Gastrocnemius medialis (tissue), 4 donors: ENCODE measurements at regions of chr11 and their contacts with region 1.

Region 1: DNA sequence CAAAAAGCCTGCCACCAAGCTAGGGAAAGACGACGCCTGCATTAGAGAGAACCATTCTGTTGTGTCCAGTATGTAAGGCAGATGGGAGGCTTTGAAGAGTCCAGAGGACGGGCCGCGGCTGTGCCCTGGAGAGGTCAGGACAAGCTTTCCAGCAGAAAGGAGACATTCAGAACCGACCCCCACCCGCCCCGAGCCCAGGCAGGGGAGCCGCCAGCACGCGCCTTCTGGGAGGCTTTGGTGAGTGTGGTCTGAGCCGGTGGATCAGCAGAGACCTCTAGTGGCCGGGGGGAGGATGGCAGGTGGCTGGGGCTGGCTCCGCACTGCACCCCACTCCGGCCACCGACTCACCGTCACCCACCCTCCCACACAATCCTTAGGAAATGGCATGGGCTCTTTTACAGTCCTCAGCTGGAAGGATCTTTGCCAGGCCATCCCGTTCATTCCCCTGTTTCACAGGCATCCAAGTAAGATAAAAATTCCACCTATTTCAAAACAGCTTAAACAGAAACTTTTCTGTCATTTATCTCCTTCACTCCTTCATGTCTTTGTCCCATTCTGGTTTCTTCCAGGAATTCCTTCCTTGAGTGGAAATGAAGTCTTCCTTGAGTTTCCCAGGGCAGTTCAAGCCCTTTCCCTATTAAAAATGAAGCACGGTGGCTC is 91.2 kb downstream of the FEZ1 start:
- DNase-seq: peak; percentile 68 to 80
- ATAC-seq: peak; percentile 40 to 50
- H3K4me3 ChIP-seq: peak overlapping the region; percentile 19 to 42 (median 26)
- H3K27ac ChIP-seq: peak overlapping the region; percentile 90 to 96 (median 93)
- H3K4me1 ChIP-seq: peaks cover 56 to 64% of the 10 kb centered on the region in 2 donors
- H3K27me3 ChIP-seq: no peaks in the 10 kb centered on the region
- CTCF ChIP-seq: peak; percentile 92 to 99 (median 98)
- POLR2A ChIP-seq: no peak

Region 2: DNA sequence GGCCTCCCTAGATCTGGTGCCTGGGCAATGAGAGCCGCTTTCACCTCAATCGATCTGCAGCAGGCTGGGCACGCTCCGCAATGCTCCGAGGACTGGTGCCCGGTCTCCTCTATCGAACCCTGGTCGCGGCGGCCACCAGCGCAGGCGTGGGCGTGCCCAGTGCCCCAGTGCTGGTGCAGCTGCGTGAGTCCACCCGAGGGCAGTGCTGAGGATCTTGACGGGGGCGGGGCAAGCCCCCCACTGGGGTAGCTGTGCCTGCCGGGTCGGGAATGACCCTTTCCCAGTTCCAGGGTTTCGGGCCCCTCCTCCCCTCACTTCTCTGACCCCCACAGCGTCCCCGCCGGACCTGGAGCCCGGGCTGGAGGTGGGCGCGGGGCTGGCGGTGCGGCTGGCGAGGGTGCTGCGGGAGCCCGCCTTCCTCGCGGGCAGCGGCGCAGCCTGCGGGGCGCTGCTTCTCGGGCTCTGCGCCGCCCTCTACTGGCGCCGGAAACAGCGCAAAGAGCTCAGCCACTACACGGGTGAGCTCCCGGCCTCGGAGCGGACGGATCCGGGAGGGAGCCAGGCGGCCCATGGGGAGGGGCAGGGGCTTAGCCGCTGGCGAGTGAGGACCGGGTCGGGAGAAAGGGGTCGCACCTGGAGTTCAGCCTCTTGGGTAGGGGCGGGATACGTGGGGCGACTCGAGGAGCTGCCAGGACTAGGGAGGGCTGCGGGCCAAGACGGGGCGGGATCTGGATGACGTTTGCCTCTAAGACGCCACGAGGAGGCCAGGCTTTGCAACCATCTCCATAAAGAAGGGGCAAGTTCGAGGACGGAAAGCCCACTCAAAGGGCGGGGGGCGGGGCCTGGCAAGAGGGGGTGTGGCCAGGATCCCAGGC is 528.7 kb before region 1 on chr11:
- in situ Hi-C with region 1: no loop called
- intact Hi-C with region 1: no loop called
- DNase-seq: peak; percentile 54 to 70
- ATAC-seq: peak; percentile 91
- H3K4me3 ChIP-seq: peak overlapping the region; percentile 60 to 93 (median 64)
- H3K27ac ChIP-seq: peak overlapping the region; percentile 72 to 88 (median 76)
- H3K4me1 ChIP-seq: peaks cover 0 to 13% of the 10 kb centered on the region in 2 donors
- H3K27me3 ChIP-seq: peaks cover 13 to 30% (median 22%) of the 10 kb centered on the region in 3 donors
- CTCF ChIP-seq: peak; percentile 43 to 71 (median 62)
- POLR2A ChIP-seq: peak; percentile 11 to 26

Region 3: DNA sequence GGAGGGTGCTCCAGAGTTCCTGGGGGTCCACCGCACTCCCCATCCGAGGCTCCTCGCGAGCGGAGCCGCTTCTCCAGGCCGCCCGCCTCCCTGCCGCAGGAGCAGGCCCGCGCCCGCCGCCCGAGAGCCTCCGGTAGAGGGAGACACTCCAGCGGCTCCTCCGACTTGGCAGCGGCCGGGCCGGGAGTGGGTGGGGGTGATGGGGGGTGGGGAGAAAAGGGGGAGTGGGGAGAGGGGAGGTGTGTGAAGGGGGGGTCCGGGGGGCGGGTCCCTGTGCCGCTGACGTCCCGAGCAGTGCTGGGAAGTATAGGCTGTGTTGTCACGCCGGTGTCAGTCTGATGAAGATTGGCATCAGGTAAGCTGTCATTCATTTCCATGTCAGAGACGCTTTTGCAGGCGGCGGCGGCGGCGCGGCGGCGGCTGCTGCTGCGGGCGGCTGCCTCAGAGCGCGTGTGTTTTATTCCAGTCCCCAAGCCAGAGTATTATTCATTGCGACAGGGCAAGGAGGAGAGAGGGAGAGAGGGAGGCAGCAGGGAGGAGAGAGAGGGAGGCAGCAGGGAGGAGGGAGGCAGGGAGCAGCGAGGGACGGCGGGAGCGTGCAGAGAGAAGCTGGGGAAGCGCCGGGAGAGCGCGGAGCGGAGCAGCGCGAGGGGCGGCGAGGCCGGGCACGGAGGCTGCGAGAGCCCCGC is 240.3 kb before region 1 on chr11 and contains the start of gene PKNOX2:
- in situ Hi-C with region 1: loop called in 1 of 4 experiments (anchors 10 kb)
- intact Hi-C with region 1: loop called (anchors 1 kb)
- DNase-seq: peak; percentile 61 to 83
- ATAC-seq: peak; percentile 65 to 70
- H3K4me3 ChIP-seq: peak within 1 kb of the TSS; percentile 62 to 90 (median 70)
- H3K27ac ChIP-seq: peak within 1 kb of the TSS; percentile 88 to 99 (median 91)
- H3K4me1 ChIP-seq: peaks cover 31 to 32% of the 10 kb centered on the region in 2 donors
- H3K27me3 ChIP-seq: no peaks in the 10 kb centered on the region
- CTCF ChIP-seq: peak; percentile 51 to 91 (median 54)
- POLR2A ChIP-seq: peak; percentile 93 to 96
- total RNA-seq, gene PKNOX2: 3.7 to 11.7 (median 6.0) TPM

Region 4: GRCh38 chr11:125233809-125234208 is 171.1 kb before region 1 on chr11:
- in situ Hi-C with region 1: no loop called
- intact Hi-C with region 1: loop called (anchors 2 kb)
- DNase-seq: no peak
- ATAC-seq: no peak
- H3K4me3 ChIP-seq: no peak overlapping the region
- H3K27ac ChIP-seq: no peak overlapping the region
- H3K4me1 ChIP-seq: peaks cover 35% of the 10 kb centered on the region in 2 donors
- H3K27me3 ChIP-seq: no peaks in the 10 kb centered on the region
- CTCF ChIP-seq: no peak
- POLR2A ChIP-seq: no peak

Region 5: GRCh38 chr11:125295931-125296330 is 109.0 kb before region 1 on chr11:
- in situ Hi-C with region 1: no loop called
- intact Hi-C with region 1: loop called (anchors 5 kb)
- DNase-seq: no peak
- ATAC-seq: no peak
- H3K4me3 ChIP-seq: no peak overlapping the region
- H3K27ac ChIP-seq: no peak overlapping the region
- H3K4me1 ChIP-seq: peaks cover 19 to 22% of the 10 kb centered on the region in 2 donors
- H3K27me3 ChIP-seq: no peaks in the 10 kb centered on the region
- CTCF ChIP-seq: no peak
- POLR2A ChIP-seq: no peak

Region 6: DNA sequence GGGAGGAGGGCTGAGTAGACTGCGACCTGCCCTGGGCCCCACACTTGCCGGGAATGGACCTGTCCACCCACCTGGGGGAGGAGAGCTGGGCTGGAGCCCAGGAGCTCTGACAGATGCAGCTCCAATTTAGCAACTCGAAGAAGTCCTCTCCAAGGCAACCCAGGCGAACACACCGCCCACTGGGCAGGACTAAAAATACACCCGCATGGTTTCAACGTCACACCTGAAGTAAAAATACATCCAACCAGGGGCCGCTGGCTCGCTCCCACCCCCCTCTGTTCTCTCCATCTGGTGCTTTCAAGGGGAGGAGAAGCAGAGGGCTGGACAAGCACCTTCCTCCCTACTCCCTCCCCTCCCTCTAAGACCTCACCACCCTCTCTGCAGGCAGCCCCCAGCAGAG is 28.8 kb before region 1 on chr11:
- in situ Hi-C with region 1: no loop called
- intact Hi-C with region 1: loop called (anchors 1 kb)
- DNase-seq: peak; percentile 89 to 96
- ATAC-seq: peak; percentile 83 to 84
- H3K4me3 ChIP-seq: peak overlapping the region in 1 of 4 donors; percentile 3
- H3K27ac ChIP-seq: peak overlapping the region; percentile 78 to 93 (median 90)
- H3K4me1 ChIP-seq: peaks cover 53 to 57% of the 10 kb centered on the region in 2 donors
- H3K27me3 ChIP-seq: no peaks in the 10 kb centered on the region
- CTCF ChIP-seq: no peak
- POLR2A ChIP-seq: peak in 1 of 2 donors; percentile 77

Region 7: GRCh38 chr11:126202646-126203359 is 797.9 kb after region 1 on chr11:
- in situ Hi-C with region 1: no loop called
- intact Hi-C with region 1: loop called (anchors 10 kb)
- DNase-seq: peak in 1 of 2 donors; percentile 51
- ATAC-seq: peak in 1 of 2 donors; percentile 40
- H3K4me3 ChIP-seq: peak overlapping the region in 1 of 4 donors; percentile 22
- H3K27ac ChIP-seq: peak overlapping the region; percentile 71 to 95 (median 92)
- H3K4me1 ChIP-seq: peaks cover 68 to 85% of the 10 kb centered on the region in 2 donors
- H3K27me3 ChIP-seq: no peaks in the 10 kb centered on the region
- CTCF ChIP-seq: no peak
- POLR2A ChIP-seq: no peak